GM12878 (cell line): ENCODE measurements at regions of chr5 and their contacts with region 1.

Region 1: DNA sequence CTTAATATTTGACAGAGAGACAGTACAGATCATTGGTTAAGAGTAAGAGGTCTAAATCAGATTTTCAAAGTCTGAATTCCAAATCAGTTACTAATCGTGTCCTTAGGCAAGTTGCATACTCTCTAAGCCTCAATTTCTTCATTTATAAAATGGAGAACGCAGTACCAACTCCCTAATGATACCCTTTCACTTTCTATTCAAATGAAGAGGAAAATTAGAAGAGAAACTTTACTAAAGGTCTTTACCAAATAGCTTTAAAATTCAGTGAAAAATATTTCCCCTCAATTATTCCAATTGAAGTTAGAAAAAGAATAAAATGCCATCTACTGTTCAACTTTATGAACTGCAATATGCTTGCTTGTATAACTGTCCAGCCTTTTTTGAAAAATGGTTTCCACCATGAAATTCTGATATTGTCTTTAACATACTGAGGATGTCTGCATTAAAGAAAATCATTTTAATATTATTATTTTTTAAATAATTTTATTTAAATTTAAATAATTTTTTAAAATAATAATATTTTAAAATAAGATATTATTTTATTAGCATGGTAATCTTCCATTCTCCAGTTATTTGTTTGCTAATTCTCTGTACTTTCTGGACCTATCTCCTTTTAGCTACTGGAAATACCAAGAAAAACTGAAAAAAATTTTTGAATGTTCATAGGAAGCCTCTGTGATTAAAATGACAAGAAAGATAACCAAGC is 36.0 kb downstream of the POC5 start:
- DNase-seq: no peak
- ATAC-seq: peak; percentile 74
- H3K4me3 ChIP-seq: no peak overlapping the region
- H3K27ac ChIP-seq: no peak overlapping the region
- H3K4me1 ChIP-seq: no peaks in the 10 kb centered on the region
- H3K27me3 ChIP-seq: no peaks in the 10 kb centered on the region
- CTCF ChIP-seq: peak; percentile 52 to 62 (median 56)
- EP300 ChIP-seq: no peak
- POLR2A ChIP-seq: no peak
- RAD21 ChIP-seq: peak; percentile 62

Region 2: DNA sequence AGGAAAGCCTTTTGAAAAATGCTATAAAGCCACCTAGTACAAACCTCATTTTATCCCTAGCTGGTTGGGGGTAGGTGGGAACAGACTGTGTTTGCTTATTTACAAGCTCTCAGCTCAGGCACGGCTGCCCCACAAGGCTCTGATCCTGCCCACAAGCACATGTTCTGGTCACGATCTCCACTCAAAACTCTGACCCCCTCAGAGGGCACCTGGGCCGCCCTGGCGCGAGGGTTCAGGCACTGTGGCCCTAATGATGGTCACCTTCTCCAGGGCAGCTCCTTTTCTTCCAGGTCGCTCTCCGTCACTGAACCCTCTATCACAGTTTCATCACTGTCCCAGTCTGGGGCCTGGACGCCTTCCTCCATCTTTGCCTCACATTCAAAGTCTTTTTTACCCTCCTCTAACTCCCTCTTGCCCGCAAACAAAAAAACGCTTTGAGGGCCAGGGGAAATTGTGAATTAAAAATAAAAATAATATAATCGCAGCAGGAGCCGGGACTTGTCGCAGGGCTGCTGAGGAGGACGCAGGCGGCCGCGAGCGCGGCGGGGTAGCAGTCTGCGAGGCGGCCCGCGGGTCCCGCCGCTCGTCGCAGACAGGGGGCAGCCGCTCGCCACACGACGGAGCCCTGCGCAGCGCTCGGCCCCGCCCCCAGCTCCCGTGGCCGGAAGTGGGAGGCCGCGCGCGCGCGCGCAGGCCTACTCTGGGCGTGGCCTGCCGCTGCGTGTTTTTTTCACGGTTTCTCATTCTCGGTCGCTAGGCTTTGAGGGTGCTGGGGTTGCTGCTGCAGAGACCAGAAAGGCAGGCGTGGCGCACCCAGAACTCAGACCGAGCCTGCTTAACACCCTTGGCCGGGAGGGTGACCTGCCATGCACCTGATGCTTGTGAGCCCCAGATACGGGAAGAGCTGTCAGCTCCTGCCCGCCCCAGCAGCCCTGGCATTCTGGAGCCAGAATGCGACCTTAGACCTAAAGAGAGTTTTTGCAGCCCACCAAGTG is 444.7 kb before region 1 on chr5 and contains the start of gene ANKRD31:
- CTCF ChIA-PET with region 1: interaction called, 64 read pairs
- POLR2A ChIA-PET with region 1: interaction called, 6 read pairs
- RAD21 ChIA-PET with region 1: interaction called, 38 read pairs
- SMC1A ChIA-PET with region 1: interaction called, 53 read pairs
- in situ Hi-C with region 1: no loop called
- intact Hi-C with region 1: loop called (anchors 2 kb)
- DNase-seq: peak; percentile 42
- ATAC-seq: peak; percentile 100
- H3K4me3 ChIP-seq: peak within 1 kb of the TSS; percentile 63
- H3K27ac ChIP-seq: no peak within 1 kb of the TSS
- H3K4me1 ChIP-seq: peaks cover 3% of the 10 kb centered on the region; the same call in 1 of the 2 replicates
- H3K27me3 ChIP-seq: no peaks in the 10 kb centered on the region
- CTCF ChIP-seq: peak; percentile 60 to 85 (median 72); a peak in 5 of 6 replicates
- EP300 ChIP-seq: peak in 1 of 2 experiments; percentile 16; a peak in 1 of 4 replicates
- POLR2A ChIP-seq: peak; percentile 71
- RAD21 ChIP-seq: peak; percentile 64
- polyA plus RNA-seq, gene ANKRD31: 0.02 TPM in 1 of 2 experiments, not detected in the other

Region 3: GRCh38 chr5:75363726-75364495 is 317.4 kb before region 1 on chr5:
- CTCF ChIA-PET with region 1: interaction called, 31 read pairs
- POLR2A ChIA-PET with region 1: no interaction called
- RAD21 ChIA-PET with region 1: interaction called, 5 read pairs
- SMC1A ChIA-PET with region 1: interaction called, 8 read pairs
- in situ Hi-C with region 1: no loop called
- intact Hi-C with region 1: no loop called
- DNase-seq: no peak
- ATAC-seq: no peak
- H3K4me3 ChIP-seq: no peak overlapping the region
- H3K27ac ChIP-seq: no peak overlapping the region
- H3K4me1 ChIP-seq: peaks cover 14% of the 10 kb centered on the region
- H3K27me3 ChIP-seq: no peaks in the 10 kb centered on the region
- CTCF ChIP-seq: no peak
- EP300 ChIP-seq: no peak
- POLR2A ChIP-seq: 0 out of 2 replicates have a peak, but pooled peaks have one; percentile 29
- RAD21 ChIP-seq: no peak

Region 4: DNA sequence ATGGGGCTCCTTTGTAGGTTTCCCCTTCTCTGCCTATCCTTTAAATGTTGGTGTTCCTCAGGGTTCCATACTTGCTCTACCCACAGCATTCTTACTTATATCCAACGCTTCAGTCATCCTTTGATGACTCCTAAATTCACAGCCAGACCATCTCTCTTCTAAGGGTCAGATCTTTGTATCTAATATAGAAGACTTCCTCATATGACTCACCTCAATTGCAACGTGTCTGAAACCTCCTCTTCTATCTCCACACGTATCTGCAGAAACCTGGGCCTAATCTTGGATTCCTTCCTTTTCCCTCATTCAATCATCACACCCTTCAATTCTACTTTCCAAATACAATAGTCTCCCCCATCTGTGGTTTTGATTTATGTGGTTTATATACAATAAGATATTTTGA is 276.0 kb before region 1 on chr5:
- CTCF ChIA-PET with region 1: interaction called, 10 read pairs
- POLR2A ChIA-PET with region 1: interaction called, 4 read pairs
- RAD21 ChIA-PET with region 1: no interaction called
- SMC1A ChIA-PET with region 1: interaction called, 4 read pairs
- in situ Hi-C with region 1: no loop called
- intact Hi-C with region 1: no loop called
- DNase-seq: no peak
- ATAC-seq: peak; percentile 25; the same call in 1 of the 3 replicates
- H3K4me3 ChIP-seq: no peak overlapping the region
- H3K27ac ChIP-seq: no peak overlapping the region
- H3K4me1 ChIP-seq: no peaks in the 10 kb centered on the region
- H3K27me3 ChIP-seq: no peaks in the 10 kb centered on the region
- CTCF ChIP-seq: no peak
- EP300 ChIP-seq: no peak
- POLR2A ChIP-seq: no peak
- RAD21 ChIP-seq: no peak

Region 5: GRCh38 chr5:75566710-75567309 is 114.5 kb before region 1 on chr5:
- CTCF ChIA-PET with region 1: interaction called, 6 read pairs
- POLR2A ChIA-PET with region 1: interaction called, 3 read pairs
- RAD21 ChIA-PET with region 1: interaction called, 12 read pairs
- SMC1A ChIA-PET with region 1: interaction called, 8 read pairs
- in situ Hi-C with region 1: no loop called
- intact Hi-C with region 1: no loop called
- DNase-seq: peak; percentile 92
- ATAC-seq: peak; percentile 86
- H3K4me3 ChIP-seq: peak overlapping the region; percentile 29; the same call in 1 of the 2 replicates
- H3K27ac ChIP-seq: peak overlapping the region; percentile 96
- H3K4me1 ChIP-seq: peaks cover 36% of the 10 kb centered on the region
- H3K27me3 ChIP-seq: no peaks in the 10 kb centered on the region
- CTCF ChIP-seq: no peak
- EP300 ChIP-seq: peak; percentile 18 to 86; a peak in 2 of 4 replicates
- POLR2A ChIP-seq: no peak
- RAD21 ChIP-seq: peak; percentile 16; the same call in 1 of the 2 replicates

Region 6: GRCh38 chr5:75584641-75585040 is 96.6 kb before region 1 on chr5:
- CTCF ChIA-PET with region 1: interaction called, 13 read pairs
- POLR2A ChIA-PET with region 1: interaction called, 5 read pairs
- RAD21 ChIA-PET with region 1: interaction called, 12 read pairs
- SMC1A ChIA-PET with region 1: interaction called, 3 read pairs
- in situ Hi-C with region 1: no loop called
- intact Hi-C with region 1: no loop called
- DNase-seq: no peak
- ATAC-seq: no peak
- H3K4me3 ChIP-seq: no peak overlapping the region
- H3K27ac ChIP-seq: no peak overlapping the region
- H3K4me1 ChIP-seq: no peaks in the 10 kb centered on the region
- H3K27me3 ChIP-seq: no peaks in the 10 kb centered on the region
- CTCF ChIP-seq: 0 out of 6 replicates have a peak, but pooled peaks of 1 of the 3 experiments have one; percentile 9
- EP300 ChIP-seq: no peak
- POLR2A ChIP-seq: no peak
- RAD21 ChIP-seq: peak; percentile 22

Region 7: GRCh38 chr5:75668977-75669689 is 12.1 kb before region 1 on chr5:
- CTCF ChIA-PET with region 1: interaction called, 24 read pairs
- POLR2A ChIA-PET with region 1: interaction called, 5 read pairs
- RAD21 ChIA-PET with region 1: interaction called, 10 read pairs
- SMC1A ChIA-PET with region 1: interaction called, 35 read pairs
- in situ Hi-C with region 1: no loop called
- intact Hi-C with region 1: no loop called
- DNase-seq: peak; percentile 78
- ATAC-seq: peak; percentile 97
- H3K4me3 ChIP-seq: peak overlapping the region; percentile 49
- H3K27ac ChIP-seq: peak overlapping the region; percentile 63
- H3K4me1 ChIP-seq: peaks cover 10% of the 10 kb centered on the region
- H3K27me3 ChIP-seq: no peaks in the 10 kb centered on the region
- CTCF ChIP-seq: no peak
- EP300 ChIP-seq: 0 out of 4 replicates have a peak, but pooled peaks of 1 of the 2 experiments have one; percentile 14
- POLR2A ChIP-seq: peak; percentile 78
- RAD21 ChIP-seq: peak; percentile 34; the same call in 1 of the 2 replicates